ENCODE measurements at regions of chr6 and their contacts with region 1.

Region 1: GRCh38 chr6:15389765-15390723 is 144.2 kb downstream of the JARID2 start:
- DNase-seq: no peak
- H3K4me3 ChIP-seq: no peak overlapping the region
- H3K27ac ChIP-seq: peak overlapping the region; percentile 7 to 59 (median 36)
- H3K4me1 ChIP-seq: peaks cover 39 to 51% (median 41%) of the 10 kb centered on the region in 4 donors
- H3K27me3 ChIP-seq: no peaks in the 10 kb centered on the region
- CTCF ChIP-seq: peak; percentile 43 to 63 (median 47)
- EP300 ChIP-seq: no peak
- POLR2A ChIP-seq: no peak

Region 2: DNA sequence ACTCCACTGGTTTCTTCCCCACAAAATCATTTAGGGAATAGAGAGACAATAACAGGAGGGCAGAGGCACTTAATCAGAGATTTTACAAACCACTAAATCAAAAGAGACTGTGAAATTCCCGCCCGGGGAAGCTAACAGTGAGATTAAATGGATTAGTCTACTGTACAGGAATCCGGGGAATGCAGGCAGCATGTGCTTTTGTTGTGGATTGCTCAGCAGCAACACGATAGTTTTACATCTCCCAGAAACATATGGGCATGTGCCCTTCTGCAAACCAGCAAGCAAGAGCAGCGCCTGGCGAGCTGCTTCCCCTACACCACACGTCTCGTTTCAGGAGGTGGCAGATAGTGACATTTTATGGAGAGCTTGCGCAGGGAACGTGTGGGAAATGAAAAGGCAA is 890.2 kb before region 1 on chr6:
- intact Hi-C with region 1: no loop called
- DNase-seq: no peak
- H3K4me3 ChIP-seq: no peak overlapping the region
- H3K27ac ChIP-seq: no peak overlapping the region
- H3K4me1 ChIP-seq: peaks cover 0 to 9% (median 2%) of the 10 kb centered on the region in 4 donors
- H3K27me3 ChIP-seq: no peaks in the 10 kb centered on the region
- CTCF ChIP-seq: no peak
- EP300 ChIP-seq: no peak
- POLR2A ChIP-seq: no peak

Region 3: DNA sequence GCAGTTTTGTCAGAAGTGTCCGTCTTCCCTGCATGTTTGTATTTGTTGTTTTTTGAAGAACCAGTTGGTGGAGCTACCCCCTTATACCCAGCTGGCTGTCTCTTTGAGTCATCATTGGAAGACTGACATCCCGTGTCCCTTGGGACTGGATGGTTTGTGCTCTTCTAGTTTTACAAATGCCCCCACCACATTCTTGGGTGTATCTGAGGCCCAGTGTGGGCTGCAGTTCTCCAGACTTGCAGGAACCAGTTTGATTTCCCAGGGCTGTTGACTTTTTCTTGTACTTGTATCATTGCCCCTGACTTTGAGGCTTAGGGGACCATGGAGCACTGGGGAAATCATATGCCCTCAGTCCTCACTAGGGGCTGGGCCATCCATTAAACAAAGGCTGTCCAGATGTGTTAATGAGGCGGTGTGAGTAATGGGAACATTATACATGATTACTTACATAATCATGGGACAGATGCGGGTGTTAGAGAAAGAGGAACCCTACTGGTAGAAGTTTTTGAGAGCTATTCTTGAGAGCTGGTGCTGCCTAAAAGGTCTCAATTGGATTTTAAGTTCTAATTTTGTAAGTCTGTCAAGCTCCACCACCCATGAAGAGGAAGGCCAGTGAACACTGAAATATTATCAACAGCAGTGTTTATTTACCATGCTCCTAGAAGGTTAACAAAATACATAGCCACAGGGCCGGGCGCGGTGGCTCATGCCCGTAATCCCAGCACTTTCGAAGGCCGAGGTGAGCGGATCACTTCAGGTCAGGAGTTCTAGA is 135.8 kb before region 1 on chr6:
- intact Hi-C with region 1: loop called (anchors 10 kb)
- DNase-seq: no peak
- H3K4me3 ChIP-seq: no peak overlapping the region
- H3K27ac ChIP-seq: no peak overlapping the region
- H3K4me1 ChIP-seq: peaks cover 39 to 66% (median 53%) of the 10 kb centered on the region in 4 donors
- H3K27me3 ChIP-seq: no peaks in the 10 kb centered on the region
- CTCF ChIP-seq: no peak
- EP300 ChIP-seq: no peak
- POLR2A ChIP-seq: no peak

Measured in esophagus muscularis mucosa (tissue), 4 donors.